Activated CD4-positive, alpha-beta memory T cell treated with anti-CD3 and anti-CD28 coated beads for 36 hours (primary cell): ENCODE measurements at regions of chr5 and their contacts with region 1.

Region 1: DNA sequence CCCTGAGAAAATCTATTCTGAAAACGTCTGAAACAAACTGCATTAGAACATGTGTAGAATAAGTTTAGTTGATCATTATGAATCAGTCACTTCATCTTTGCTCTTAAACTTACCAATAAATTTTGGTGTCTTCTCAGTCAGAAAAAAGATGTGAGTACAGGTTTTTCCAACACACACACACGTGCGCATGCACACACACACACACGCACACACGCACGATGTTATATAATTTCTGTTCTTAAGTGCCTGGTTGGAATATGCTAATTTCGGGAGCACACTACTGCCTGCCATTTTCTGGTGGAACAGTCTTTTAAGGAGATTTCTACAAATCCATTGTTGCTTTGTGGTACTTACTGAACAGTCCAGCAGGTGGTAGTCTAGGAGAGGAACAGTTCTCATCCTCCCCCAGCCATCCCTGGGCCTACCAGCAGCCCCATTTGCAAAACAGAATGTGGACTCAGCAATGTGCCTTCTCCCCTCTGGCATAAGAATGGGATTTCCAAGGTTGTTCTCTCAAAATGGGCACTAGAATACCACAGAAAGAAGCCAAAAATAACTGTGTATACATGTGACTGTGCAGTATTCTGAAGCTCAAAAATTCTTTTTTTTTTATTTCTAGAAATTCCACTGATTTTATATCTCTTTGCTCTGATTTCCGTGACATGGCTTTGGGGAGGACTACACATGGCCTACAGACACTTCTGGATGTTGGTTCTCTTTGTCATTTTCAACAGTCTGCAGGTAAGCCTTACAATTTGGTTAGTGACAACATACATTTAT is 281.3 kb downstream of the ARRDC3 start:
- DNase-seq: peak; percentile 61
- H3K4me3 Mint-ChIP-seq: no peak overlapping the region
- H3K27ac Mint-ChIP-seq: no peak overlapping the region
- H3K4me1 Mint-ChIP-seq: no peaks in the 10 kb centered on the region
- H3K27me3 Mint-ChIP-seq: peaks cover 2% of the 10 kb centered on the region

Region 2: DNA sequence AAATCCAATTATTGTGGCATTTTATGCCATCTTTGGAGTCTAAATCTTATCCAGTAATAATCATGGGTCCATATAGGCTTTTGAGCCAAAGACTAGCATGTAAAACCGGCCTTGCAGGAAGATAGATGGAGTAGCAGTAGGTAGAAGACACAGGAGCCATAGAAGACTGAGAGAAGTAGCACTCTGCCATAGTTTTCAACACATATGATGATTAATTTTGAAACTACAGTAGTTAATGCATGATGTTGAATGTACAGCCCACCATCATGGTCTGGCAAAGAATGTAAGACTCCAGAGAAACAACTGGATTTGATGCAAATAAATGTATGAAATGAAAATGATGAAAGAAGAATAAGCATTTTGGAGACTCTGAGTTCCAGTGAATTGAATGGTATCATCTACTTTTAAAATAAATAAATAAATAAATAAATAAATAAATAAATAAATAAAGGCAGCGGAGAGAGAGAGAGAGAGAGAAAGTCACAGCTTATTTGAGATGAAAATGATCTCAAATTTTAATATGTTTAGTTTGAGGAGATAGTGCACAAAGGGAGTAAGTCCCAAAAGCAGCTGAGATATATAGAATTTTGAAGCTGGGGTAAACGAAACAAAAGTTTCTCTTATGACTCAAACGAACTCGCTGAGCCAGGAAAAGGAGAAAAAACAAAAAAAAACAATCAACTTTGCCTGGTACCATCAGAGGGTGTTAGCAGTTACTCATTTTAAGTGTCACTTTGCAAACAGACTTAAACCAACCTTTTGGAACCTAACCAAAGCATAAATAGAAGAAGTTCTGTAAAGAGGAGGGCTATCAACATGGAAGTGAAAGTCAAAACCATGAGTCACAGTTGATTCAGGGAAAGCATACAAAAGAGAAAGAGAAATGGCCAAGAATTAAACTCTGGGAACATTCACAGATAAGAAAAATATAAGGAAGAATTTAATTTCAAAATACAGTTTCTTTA is 1080.9 kb before region 1 on chr5:
- CTCF ChIA-PET with region 1: no interaction called
- POLR2A ChIA-PET with region 1: no interaction called
- intact Hi-C with region 1: no loop called
- DNase-seq: no peak
- H3K4me3 Mint-ChIP-seq: no peak overlapping the region
- H3K27ac Mint-ChIP-seq: no peak overlapping the region
- H3K4me1 Mint-ChIP-seq: no peaks in the 10 kb centered on the region
- H3K27me3 Mint-ChIP-seq: no peaks in the 10 kb centered on the region

Region 3: GRCh38 chr5:90932052-90932699 is 169.6 kb before region 1 on chr5:
- CTCF ChIA-PET with region 1: interaction called, 4 read pairs
- POLR2A ChIA-PET with region 1: no interaction called
- intact Hi-C with region 1: loop called (anchors 5 kb)
- DNase-seq: peak; percentile 37
- H3K4me3 Mint-ChIP-seq: no peak overlapping the region
- H3K27ac Mint-ChIP-seq: no peak overlapping the region
- H3K4me1 Mint-ChIP-seq: no peaks in the 10 kb centered on the region
- H3K27me3 Mint-ChIP-seq: peaks cover 10% of the 10 kb centered on the region

Region 4: DNA sequence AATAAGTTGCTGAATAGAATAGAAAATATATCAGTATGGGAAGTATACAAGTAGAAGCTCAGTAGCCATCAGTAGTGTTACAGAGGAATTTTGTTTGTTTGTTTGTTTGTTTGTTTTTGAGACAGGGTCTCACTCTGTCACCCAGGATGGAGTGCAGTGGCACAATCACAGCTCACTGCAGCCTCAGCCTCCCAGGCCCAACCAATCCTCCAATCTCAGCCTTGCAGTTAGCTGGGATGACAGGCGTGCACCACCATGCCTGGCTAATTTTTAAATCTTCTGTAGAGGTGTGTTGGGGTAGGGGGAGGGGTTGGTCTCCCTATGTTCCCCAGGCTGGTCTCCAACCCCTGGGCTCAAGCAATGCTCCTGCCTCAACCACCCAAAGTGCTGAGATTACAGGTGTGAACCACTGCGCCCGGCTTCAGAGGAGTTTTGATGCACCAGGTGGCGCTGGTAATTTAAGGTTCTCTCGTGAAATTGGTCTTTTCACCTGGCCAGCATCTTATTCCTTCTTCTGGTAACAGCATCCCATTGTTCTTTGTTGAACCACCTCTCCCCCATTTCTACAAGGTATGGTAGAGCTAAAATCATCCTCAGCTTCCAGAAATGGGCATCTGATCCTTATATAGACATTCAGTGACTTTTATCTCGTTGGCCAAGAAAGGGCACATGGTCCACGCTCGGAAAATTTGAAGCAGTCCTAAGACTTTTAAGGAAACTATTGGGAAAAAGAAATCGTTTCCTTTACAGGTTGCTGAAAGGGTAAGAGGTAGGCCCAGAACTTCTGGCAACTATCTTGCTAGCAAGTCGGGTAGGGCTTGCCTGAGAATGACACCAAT is 124.3 kb after region 1 on chr5:
- CTCF ChIA-PET with region 1: interaction called, 3 read pairs
- POLR2A ChIA-PET with region 1: no interaction called
- intact Hi-C with region 1: loop called (anchors 2 kb)
- DNase-seq: peak; percentile 73
- H3K4me3 Mint-ChIP-seq: no peak overlapping the region
- H3K27ac Mint-ChIP-seq: peak overlapping the region; percentile 13
- H3K4me1 Mint-ChIP-seq: peaks cover 4% of the 10 kb centered on the region
- H3K27me3 Mint-ChIP-seq: peaks cover 7% of the 10 kb centered on the region